ENCODE measurements at regions of chr16 and their contacts with region 1.

Region 1: DNA sequence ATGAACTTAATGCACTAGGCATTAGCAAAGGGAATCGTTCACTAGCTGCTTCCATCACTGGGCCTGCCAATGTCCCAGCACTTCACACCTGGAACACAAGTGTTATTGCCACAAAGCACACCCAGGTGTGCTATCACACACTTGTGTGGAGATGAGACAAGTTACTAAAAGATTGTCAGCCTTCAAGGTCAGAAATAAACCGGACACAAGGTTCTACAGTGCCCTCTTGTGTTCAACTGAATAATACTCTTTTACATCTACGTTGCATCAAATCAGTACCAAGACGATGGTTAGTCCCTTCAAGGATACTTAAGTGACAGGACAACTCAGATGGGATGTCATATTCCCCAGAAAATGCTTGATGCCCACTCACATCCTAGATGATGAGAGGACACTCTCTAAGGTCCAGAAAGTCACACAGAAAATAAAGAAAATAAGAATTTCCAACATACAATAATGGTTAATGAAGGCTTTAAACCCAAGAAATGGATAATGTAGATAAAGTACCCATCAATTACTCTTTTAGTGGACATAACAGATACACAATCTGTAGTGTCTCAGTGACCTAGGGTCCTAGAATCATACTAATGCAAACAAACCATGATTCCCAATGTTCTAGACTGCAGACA is 16.4 kb upstream of the GLG1 start:
- DNase-seq: no peak
- ATAC-seq: peak; percentile 23 to 34 (median 28)
- H3K4me3 ChIP-seq: no peak overlapping the region
- H3K27ac ChIP-seq: no peak overlapping the region
- H3K4me1 ChIP-seq: peaks cover 0 to 39% (median 13%) of the 10 kb centered on the region in 4 donors
- H3K27me3 ChIP-seq: no peaks in the 10 kb centered on the region
- CTCF ChIP-seq: peak; percentile 56 to 69 (median 63)
- POLR2A ChIP-seq: no peak

Region 2: GRCh38 chr16:74451951-74452758 is 171.2 kb before region 1 on chr16:
- intact Hi-C with region 1: loop called in 1 of 2 experiments (anchors 10 kb)
- DNase-seq: no peak
- ATAC-seq: no peak
- H3K4me3 ChIP-seq: no peak overlapping the region
- H3K27ac ChIP-seq: no peak overlapping the region
- H3K4me1 ChIP-seq: peaks cover 0 to 5% (median 0%) of the 10 kb centered on the region in 4 donors
- H3K27me3 ChIP-seq: no peaks in the 10 kb centered on the region
- CTCF ChIP-seq: no peak
- POLR2A ChIP-seq: no peak

Region 3: GRCh38 chr16:74771656-74772315 is 148.5 kb after region 1 on chr16:
- intact Hi-C with region 1: no loop called
- DNase-seq: no peak
- ATAC-seq: no peak
- H3K4me3 ChIP-seq: no peak overlapping the region
- H3K27ac ChIP-seq: no peak overlapping the region
- H3K4me1 ChIP-seq: peaks cover 0 to 12% (median 0%) of the 10 kb centered on the region in 4 donors
- H3K27me3 ChIP-seq: no peaks in the 10 kb centered on the region
- CTCF ChIP-seq: no peak
- POLR2A ChIP-seq: no peak

Measured in right lobe of liver (tissue), 6 donors.